A673 (cell line): ENCODE measurements at regions of chr1 and their contacts with region 1.

Region 1: GRCh38 chr1:12208764-12209494 is 20.9 kb upstream of the VPS13D start:
- DNase-seq: peak; percentile 84
- H3K4me3 ChIP-seq: no peak overlapping the region
- H3K27ac ChIP-seq: no peak overlapping the region
- H3K4me1 ChIP-seq: no peaks in the 10 kb centered on the region
- H3K27me3 ChIP-seq: no peaks in the 10 kb centered on the region
- CTCF ChIP-seq: peak; percentile 87

Region 2: DNA sequence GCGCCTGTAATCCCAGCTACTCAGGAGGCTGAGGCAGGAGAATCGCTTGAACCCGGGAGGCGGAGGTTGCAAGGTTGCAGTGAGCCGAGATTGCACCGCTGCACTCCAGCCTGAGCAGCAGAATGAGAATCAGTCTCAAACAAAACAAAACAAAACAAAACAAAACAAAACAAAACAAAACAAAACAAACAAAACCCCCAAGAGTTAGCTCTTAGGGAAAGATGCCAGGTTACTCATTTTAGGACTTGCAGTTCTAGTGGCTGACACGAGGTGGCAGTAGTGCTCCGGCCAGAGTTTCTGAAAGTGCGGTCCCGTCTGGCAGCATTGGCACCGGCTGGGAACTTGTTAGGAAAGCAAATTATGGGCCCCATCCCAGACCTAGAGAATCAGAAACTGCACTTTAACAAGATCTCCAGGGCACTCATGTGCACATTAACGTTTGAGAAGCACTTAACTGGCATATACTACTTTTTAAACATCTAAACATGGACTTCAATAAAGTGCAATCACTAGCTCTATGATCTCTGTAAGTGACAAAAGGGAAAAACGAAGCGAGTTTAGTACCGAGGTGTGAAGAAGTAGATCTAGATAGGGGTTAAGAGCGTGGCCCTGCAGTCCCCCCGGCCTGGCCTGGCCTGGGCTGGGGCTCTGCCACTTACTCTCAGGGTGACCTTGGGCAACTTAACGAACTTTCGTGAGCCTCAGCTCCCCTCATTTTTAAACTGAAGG is 84.1 kb before region 1 on chr1:
- CTCF ChIA-PET with region 1: interaction called, 12 read pairs
- POLR2A ChIA-PET with region 1: no interaction called
- intact Hi-C with region 1: loop called (anchors 1 kb)
- DNase-seq: peak; percentile 72
- H3K4me3 ChIP-seq: no peak overlapping the region
- H3K27ac ChIP-seq: no peak overlapping the region
- H3K4me1 ChIP-seq: no peaks in the 10 kb centered on the region
- H3K27me3 ChIP-seq: no peaks in the 10 kb centered on the region
- CTCF ChIP-seq: peak; percentile 87

Region 3: GRCh38 chr1:12191242-12192032 is 17.5 kb before region 1 on chr1:
- CTCF ChIA-PET with region 1: no interaction called
- POLR2A ChIA-PET with region 1: no interaction called
- intact Hi-C with region 1: loop called (anchors 1 kb)
- DNase-seq: peak; percentile 26
- H3K4me3 ChIP-seq: no peak overlapping the region
- H3K27ac ChIP-seq: no peak overlapping the region
- H3K4me1 ChIP-seq: no peaks in the 10 kb centered on the region
- H3K27me3 ChIP-seq: peaks cover 33% of the 10 kb centered on the region
- CTCF ChIP-seq: no peak

Region 4: GRCh38 chr1:12219800-12220199 is 10.9 kb after region 1 on chr1:
- CTCF ChIA-PET with region 1: no interaction called
- POLR2A ChIA-PET with region 1: no interaction called
- intact Hi-C with region 1: no loop called
- DNase-seq: no peak
- H3K4me3 ChIP-seq: no peak overlapping the region
- H3K27ac ChIP-seq: no peak overlapping the region
- H3K4me1 ChIP-seq: no peaks in the 10 kb centered on the region
- H3K27me3 ChIP-seq: no peaks in the 10 kb centered on the region
- CTCF ChIP-seq: no peak

Region 5: DNA sequence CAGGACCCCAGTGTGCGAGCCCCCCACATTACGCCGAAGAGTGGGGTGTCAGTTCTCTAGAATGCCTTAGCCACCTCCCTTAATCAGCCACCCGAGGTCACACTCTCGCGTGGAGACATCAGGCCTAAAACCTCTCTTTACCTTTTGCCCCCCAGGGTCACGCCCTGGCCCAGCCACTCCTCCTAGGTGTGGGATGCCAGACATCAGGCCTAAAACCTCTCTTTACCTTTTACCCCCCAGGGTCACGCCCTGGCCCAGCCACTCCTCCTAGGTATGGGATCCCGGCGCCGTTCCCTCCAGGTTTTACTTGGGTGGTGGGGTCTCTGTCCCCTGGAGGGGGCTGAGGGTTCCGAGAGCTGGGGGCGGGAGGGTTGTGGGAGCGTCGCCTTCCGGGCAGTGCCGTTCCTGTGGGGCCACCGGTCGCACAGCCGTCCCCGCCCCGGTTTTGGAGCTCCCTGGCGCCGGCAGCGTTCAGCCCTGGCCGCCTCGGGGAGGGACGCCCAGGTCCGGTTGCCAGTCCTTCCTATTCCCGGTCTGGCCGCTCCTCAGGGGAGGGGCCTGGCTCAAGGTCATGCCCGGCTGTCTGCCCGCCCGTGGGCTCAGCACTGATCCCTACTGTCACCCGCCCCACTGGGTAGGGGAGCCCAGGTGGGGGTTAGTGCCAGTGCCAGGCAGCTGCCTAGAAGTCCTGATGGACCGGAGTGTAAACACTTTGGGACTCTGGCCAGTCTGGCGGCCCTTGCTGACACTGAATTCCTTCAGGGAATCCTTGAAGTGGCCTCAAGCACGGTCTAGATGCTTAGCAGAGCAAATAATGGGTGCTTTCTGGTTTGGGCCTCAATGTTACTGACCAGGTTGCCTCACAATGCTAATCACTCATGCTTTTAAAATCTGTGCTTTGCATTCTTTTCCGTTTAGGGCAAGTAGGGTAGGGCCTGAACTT is 21.9 kb after region 1 on chr1:
- CTCF ChIA-PET with region 1: no interaction called
- POLR2A ChIA-PET with region 1: no interaction called
- intact Hi-C with region 1: no loop called
- DNase-seq: no peak
- H3K4me3 ChIP-seq: peak overlapping the region; percentile 99
- H3K27ac ChIP-seq: peak overlapping the region; percentile 88
- H3K4me1 ChIP-seq: peaks cover 5% of the 10 kb centered on the region
- H3K27me3 ChIP-seq: no peaks in the 10 kb centered on the region
- CTCF ChIP-seq: no peak